Left ventricle myocardium inferior (tissue), 1 donor: ENCODE measurements at regions of chr11 and their contacts with region 1.

Region 1: GRCh38 chr11:57527056-57527631 is 3.4 kb downstream of the TIMM10 start:
- DNase-seq: peak; percentile 66
- H3K4me3 ChIP-seq: no peak overlapping the region
- H3K27ac ChIP-seq: no peak overlapping the region
- H3K4me1 ChIP-seq: peaks cover 22% of the 10 kb centered on the region
- H3K27me3 ChIP-seq: no peaks in the 10 kb centered on the region
- CTCF ChIP-seq: peak; percentile 94

Region 2: GRCh38 chr11:57085611-57086010 is 441.5 kb before region 1 on chr11:
- intact Hi-C with region 1: no loop called
- DNase-seq: no peak
- H3K4me3 ChIP-seq: no peak overlapping the region
- H3K27ac ChIP-seq: no peak overlapping the region
- H3K4me1 ChIP-seq: no peaks in the 10 kb centered on the region
- H3K27me3 ChIP-seq: no peaks in the 10 kb centered on the region
- CTCF ChIP-seq: peak; percentile 19

Region 3: DNA sequence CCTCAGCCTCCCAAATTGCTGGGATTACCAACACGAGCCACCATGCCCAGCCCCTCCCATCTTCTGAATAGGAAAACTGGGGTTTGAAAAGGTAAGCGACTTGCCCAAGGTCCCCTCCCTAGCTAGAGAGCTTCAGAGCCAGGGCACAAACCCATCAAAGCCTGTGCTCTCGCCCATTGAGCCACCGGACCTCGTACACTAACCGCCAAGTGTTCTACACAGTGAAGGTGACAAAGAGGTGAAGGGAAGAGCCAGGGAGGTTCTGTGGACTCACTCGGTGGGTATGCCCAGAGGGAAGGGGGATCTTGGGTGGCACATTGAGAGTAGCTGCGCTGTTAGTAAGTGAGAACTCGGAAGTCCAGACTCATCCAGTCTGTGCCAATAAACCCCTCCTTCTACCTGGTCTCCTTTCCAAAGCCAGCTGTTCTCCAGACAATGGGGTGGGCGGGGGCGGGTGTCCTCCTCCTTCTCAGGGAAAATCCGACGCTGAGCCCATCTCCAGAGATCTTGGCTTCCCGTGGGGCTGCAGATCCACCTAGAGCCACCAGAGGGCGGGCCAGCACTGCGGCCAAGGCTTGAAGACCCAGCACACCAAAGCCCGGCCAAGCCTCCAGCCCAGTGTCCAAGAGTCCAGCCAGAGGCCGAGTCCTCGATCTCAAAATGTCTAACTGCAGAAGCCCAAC is 70.0 kb before region 1 on chr11:
- intact Hi-C with region 1: loop called (anchors 10 kb)
- DNase-seq: peak; percentile 91
- H3K4me3 ChIP-seq: peak overlapping the region; percentile 65
- H3K27ac ChIP-seq: no peak overlapping the region
- H3K4me1 ChIP-seq: peaks cover 42% of the 10 kb centered on the region
- H3K27me3 ChIP-seq: peaks cover 64% of the 10 kb centered on the region
- CTCF ChIP-seq: peak; percentile 100

Region 4: GRCh38 chr11:57493507-57494503 is 33.3 kb before region 1 on chr11:
- intact Hi-C with region 1: loop called (anchors 2 kb)
- DNase-seq: peak; percentile 44
- H3K4me3 ChIP-seq: no peak overlapping the region
- H3K27ac ChIP-seq: no peak overlapping the region
- H3K4me1 ChIP-seq: peaks cover 18% of the 10 kb centered on the region
- H3K27me3 ChIP-seq: no peaks in the 10 kb centered on the region
- CTCF ChIP-seq: peak; percentile 92

Region 5: DNA sequence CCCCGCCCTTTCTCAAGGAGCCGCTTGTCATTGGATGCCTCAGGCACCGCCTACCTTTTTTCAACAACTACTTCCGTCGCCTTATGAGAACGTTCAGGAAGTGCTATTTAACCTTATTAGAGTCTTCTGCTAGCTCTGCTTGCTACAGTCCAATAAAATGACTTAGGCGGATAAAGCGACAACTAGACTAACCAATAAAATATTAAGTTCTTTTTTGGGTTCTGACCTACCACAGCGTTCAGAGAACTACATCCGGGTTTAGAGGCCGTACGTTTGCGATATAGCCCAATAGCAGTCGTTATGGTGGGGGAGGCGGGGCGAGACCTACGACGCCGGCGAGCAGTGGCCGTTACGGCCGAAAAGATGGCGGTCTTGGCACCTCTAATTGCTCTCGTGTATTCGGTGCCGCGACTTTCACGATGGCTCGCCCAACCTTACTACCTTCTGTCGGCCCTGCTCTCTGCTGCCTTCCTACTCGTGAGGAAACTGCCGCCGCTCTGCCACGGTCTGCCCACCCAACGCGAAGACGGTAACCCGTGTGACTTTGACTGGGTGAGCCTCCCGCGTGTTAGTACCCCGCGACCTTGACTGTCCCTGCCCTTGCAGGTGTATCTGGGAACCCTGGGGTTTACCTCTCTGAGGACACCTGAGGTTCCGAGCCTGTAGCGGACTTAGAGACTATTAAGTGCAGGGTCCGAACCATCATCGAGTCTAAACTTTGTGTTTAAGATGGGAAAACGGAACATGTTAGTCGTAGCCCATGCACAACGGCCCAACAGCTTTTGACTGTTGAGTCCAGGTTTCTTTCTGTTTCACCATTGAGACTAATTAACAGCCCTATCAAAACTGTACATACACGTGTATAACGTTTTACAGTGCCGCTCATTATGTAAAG is 185.4 kb after region 1 on chr11 and contains the start of gene TMX2:
- intact Hi-C with region 1: no loop called
- DNase-seq: peak; percentile 92
- H3K4me3 ChIP-seq: peak within 1 kb of the TSS; percentile 87
- H3K27ac ChIP-seq: peak within 1 kb of the TSS; percentile 92
- H3K4me1 ChIP-seq: peaks cover 56% of the 10 kb centered on the region
- H3K27me3 ChIP-seq: no peaks in the 10 kb centered on the region
- CTCF ChIP-seq: no peak
- total RNA-seq, gene TMX2: 64.3 TPM

Region 6: GRCh38 chr11:57964660-57965059 is 437.5 kb after region 1 on chr11:
- intact Hi-C with region 1: no loop called
- DNase-seq: no peak
- H3K4me3 ChIP-seq: no peak overlapping the region
- H3K27ac ChIP-seq: no peak overlapping the region
- H3K4me1 ChIP-seq: no peaks in the 10 kb centered on the region
- H3K27me3 ChIP-seq: no peaks in the 10 kb centered on the region
- CTCF ChIP-seq: no peak